ENCODE measurements at regions of chr3 and their contacts with region 1.

Region 1: DNA sequence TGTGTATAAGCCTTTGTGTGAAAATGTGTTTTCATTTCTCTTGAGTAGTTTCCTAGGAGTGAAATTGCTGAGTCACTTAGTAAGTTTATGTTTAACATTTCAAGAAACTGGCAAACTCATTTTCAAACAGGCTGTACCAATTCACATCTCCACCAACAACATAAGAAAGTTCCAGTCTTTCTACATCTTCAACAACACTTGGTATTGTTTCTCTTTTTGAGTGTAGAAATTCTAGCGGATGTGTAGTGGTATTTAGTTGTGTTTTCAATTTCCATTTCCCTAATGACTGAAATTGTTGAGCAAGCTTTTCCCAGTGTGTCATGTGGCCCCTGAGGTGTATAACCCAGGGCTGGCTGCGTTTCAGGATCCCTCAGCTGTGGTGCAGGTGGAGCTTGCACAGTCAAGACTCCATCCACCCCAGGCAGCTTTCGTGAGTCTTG is 258.5 kb downstream of the PDCD6IP start:
- DNase-seq: peak; percentile 72
- ATAC-seq: peak; percentile 97
- H3K4me3 Mint-ChIP-seq: no peak overlapping the region
- H3K27ac Mint-ChIP-seq: no peak overlapping the region
- H3K4me1 Mint-ChIP-seq: peaks cover 9% of the 10 kb centered on the region
- H3K27me3 Mint-ChIP-seq: peaks cover 7% of the 10 kb centered on the region

Region 2: GRCh38 chr3:33942483-33943150 is 114.4 kb before region 1 on chr3:
- CTCF ChIA-PET with region 1: no interaction called
- POLR2A ChIA-PET with region 1: no interaction called
- intact Hi-C with region 1: loop called in 1 of 2 experiments (anchors 5 kb)
- DNase-seq: no peak
- ATAC-seq: no peak
- H3K4me3 Mint-ChIP-seq: no peak overlapping the region
- H3K27ac Mint-ChIP-seq: no peak overlapping the region
- H3K4me1 Mint-ChIP-seq: peaks cover 18% of the 10 kb centered on the region
- H3K27me3 Mint-ChIP-seq: peaks cover 10% of the 10 kb centered on the region

Region 3: GRCh38 chr3:34408088-34408487 is 351.1 kb after region 1 on chr3:
- CTCF ChIA-PET with region 1: no interaction called
- POLR2A ChIA-PET with region 1: no interaction called
- intact Hi-C with region 1: no loop called
- DNase-seq: no peak
- ATAC-seq: no peak
- H3K4me3 Mint-ChIP-seq: no peak overlapping the region
- H3K27ac Mint-ChIP-seq: no peak overlapping the region
- H3K4me1 Mint-ChIP-seq: no peaks in the 10 kb centered on the region
- H3K27me3 Mint-ChIP-seq: no peaks in the 10 kb centered on the region

Region 4: DNA sequence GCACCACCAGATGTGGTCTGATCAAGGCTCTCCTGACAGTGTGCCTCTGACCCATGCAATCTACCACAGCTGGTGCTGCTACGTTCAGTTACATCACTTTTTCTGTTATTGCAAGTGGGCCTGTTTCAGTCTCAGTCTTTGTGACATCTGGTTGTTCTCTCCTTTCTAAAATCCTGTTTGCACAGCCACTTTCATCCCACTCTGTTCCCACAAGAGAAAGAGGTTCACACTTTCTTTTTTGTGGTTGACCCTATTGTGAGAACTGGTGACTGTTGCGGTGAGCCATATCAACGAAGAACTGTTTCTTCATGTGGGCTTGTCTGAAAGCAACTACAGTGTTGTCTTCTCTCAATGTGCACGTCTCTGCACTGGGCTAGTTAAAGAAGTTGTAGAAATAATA is 1239.6 kb after region 1 on chr3:
- CTCF ChIA-PET with region 1: no interaction called
- POLR2A ChIA-PET with region 1: no interaction called
- intact Hi-C with region 1: loop called in 1 of 2 experiments (anchors 5 kb)
- DNase-seq: peak; percentile 39
- ATAC-seq: peak; percentile 97
- H3K4me3 Mint-ChIP-seq: peak overlapping the region; percentile 2
- H3K27ac Mint-ChIP-seq: peak overlapping the region; percentile 59
- H3K4me1 Mint-ChIP-seq: peaks cover 12% of the 10 kb centered on the region
- H3K27me3 Mint-ChIP-seq: peaks cover 14% of the 10 kb centered on the region

Measured in activated CD4-positive, alpha-beta T cell treated with anti-CD3 and anti-CD28 coated beads for 36 hours (primary cell).